Calu3 (cell line): ENCODE measurements at regions of chr22 and their contacts with region 1.

Region 1: DNA sequence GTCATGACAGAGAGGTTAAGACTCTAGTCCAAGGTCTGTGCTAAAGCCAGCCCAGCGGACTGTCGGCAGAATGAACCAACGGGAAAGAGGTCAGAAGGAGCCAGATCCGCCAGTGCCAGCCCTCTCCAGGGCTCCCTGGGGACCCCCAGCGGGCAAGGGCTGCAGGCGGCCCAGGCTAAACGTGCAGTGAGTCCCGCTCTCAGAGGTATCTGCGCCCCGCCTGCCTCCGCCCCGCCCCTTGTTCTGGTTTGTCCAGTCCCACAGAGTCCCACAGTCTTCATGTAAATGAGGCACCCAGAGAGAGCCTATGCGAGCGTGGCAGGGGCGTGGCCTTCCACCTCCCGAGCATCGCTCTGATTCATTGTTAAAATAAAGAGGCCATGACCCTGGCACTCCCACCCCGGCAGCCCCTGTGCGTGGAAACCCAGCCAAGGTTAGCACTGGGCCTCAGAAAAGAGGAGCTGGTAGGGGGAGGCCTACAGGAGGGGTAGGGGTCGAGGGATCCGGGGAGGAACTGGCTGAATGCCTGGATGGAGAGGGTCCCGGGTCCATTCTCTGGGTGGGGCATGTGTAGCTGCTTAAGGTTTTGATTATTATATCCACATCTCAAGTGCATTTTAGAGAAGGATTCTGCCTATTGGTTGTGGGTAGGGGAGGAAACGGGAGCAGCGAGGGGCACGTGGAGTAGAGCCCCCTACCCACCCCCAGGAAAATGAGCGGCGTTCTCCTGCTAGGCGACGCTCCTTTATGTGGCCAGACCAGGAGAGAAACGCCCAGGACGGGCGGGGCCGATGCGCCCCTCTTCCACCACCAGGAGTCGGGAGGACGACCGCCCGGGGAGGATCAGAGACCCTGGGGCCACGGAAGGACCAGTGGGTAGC is at the start of gene TRIOBP:
- DNase-seq: peak; percentile 88
- H3K4me3 Mint-ChIP-seq: peak within 1 kb of the TSS; percentile 9
- H3K27ac Mint-ChIP-seq: peak within 1 kb of the TSS; percentile 33
- H3K4me1 Mint-ChIP-seq: no peaks in the 10 kb centered on the region
- H3K27me3 Mint-ChIP-seq: no peaks in the 10 kb centered on the region
- CTCF ChIP-seq: peak; percentile 47
- total RNA-seq, gene TRIOBP: 85.3 and 86.5 TPM in 2 replicates

Region 2: DNA sequence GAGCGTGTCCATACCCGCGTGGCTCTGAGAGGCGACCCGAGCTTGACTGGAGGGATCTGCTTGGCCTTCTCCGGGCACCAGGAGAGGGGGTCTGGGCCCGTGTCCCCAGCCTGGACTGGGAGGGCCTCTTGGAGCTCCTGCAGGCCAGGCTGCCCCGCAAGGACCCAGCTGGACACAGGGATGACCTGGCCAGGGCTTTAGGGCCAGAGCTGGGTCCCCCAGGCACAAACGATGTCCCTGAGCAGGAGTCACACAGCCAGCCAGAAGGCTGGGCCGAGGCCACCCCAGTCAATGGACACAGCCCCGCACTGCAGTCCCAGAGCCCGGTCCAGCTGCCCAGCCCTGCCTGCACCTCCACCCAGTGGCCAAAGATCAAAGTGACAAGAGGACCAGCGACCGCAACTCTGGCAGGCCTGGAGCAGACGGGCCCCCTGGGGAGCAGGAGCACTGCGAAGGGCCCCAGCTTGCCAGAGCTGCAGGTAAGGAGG is 38.1 kb after region 1 on chr22:
- CTCF ChIA-PET with region 1: interaction called, 3 read pairs
- intact Hi-C with region 1: loop called (anchors 5 kb)
- DNase-seq: peak; percentile 84
- H3K4me3 Mint-ChIP-seq: no peak overlapping the region
- H3K27ac Mint-ChIP-seq: no peak overlapping the region
- H3K4me1 Mint-ChIP-seq: peaks cover 31% of the 10 kb centered on the region
- H3K27me3 Mint-ChIP-seq: peaks cover 17% of the 10 kb centered on the region
- CTCF ChIP-seq: peak; percentile 52